ENCODE measurements at regions of chr18 and their contacts with region 1.

Region 1: GRCh38 chr18:79393635-79394533 is 1.8 kb upstream of the NFATC1 start:
- DNase-seq: peak; percentile 31
- H3K4me3 Mint-ChIP-seq: peak overlapping the region; percentile 85
- H3K27ac Mint-ChIP-seq: peak overlapping the region; percentile 90
- H3K4me1 Mint-ChIP-seq: peaks cover 21% of the 10 kb centered on the region
- H3K27me3 Mint-ChIP-seq: peaks cover 24% of the 10 kb centered on the region

Region 2: GRCh38 chr18:78776706-78777285 is 617.1 kb before region 1 on chr18:
- intact Hi-C with region 1: no loop called
- DNase-seq: no peak
- H3K4me3 Mint-ChIP-seq: no peak overlapping the region
- H3K27ac Mint-ChIP-seq: no peak overlapping the region
- H3K4me1 Mint-ChIP-seq: no peaks in the 10 kb centered on the region
- H3K27me3 Mint-ChIP-seq: no peaks in the 10 kb centered on the region

Region 3: DNA sequence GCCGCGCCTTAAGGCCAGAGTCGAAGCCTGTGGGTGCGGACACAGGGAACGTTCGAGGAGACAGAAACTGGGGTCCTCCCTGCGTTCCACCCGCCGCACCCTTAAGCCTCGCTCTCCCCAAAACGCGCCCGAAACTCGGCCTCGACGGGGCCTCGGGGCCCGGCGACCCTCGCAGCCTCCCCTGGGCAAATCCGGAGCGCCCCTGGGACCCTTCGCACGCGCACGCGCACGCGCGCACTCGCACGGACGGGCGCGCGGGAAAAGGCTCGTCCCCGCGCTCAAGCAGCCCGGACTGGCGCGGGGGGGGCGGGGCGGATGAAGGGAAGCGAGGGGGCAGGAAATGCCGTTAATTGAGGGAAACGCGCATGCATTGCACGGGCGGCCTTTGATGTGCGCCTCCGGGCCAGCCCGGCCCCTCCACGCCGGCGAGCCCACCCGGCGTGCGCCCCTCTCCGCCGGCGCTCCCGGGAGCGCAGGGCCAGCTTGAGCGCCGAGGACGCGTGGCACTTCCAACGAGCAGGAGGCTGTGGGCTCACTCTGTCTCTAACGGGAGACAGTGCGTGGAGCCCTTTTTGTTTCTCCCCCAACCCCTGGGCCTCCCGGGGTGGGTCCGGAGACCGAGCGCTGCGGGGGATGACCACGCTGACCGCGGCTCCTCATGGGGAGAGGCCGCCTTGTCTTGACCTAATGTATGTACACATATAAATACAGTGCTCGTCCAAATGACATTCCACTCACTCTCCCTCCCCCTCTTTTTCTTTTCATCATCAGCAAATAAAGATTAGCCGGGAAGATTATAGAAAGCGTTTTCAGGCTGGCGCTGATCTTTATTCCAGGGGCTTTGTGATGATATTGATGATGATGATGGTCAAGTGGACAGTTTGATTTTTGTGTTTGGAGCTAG is 419.5 kb before region 1 on chr18:
- intact Hi-C with region 1: no loop called
- DNase-seq: no peak
- H3K4me3 Mint-ChIP-seq: no peak overlapping the region
- H3K27ac Mint-ChIP-seq: no peak overlapping the region
- H3K4me1 Mint-ChIP-seq: peaks cover 6% of the 10 kb centered on the region
- H3K27me3 Mint-ChIP-seq: peaks cover 60% of the 10 kb centered on the region

Region 4: DNA sequence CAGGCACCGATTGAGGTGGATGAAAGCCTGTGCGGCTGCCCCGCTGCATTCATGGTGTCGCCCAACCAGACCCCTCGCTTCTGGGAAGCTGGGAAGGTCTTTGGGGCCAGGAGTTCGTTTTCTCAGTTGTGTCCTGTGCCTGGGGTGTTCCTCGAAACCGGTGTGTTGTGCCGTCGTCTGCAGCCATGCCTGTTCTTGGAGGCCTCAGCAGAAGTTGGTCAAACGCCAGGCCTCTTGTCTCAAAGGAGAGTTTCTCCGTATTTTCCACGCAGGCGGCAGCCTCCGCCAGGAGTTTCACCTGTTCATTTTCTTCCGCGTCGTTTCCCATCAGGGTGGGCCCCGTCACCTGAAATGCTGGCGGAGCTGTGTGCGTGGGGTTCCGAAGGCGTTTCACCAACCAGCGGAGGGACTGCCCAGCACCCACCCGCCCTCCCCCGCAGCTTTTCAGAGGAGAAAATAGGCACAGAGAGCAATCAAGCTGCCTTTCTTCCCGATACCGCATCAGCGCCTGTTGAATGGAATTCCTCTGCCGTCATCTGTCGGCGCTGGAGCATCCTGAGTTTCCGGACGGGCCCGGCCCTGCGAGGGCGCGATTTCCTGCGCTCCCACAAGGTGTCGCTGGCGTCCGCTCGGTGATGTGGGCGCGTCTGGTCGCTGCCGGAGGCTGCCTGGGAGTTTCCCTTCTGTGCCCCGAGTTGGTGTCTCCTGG is 15.2 kb before region 1 on chr18:
- intact Hi-C with region 1: loop called (anchors 1 kb)
- DNase-seq: peak; percentile 76
- H3K4me3 Mint-ChIP-seq: no peak overlapping the region
- H3K27ac Mint-ChIP-seq: no peak overlapping the region
- H3K4me1 Mint-ChIP-seq: peaks cover 14% of the 10 kb centered on the region
- H3K27me3 Mint-ChIP-seq: no peaks in the 10 kb centered on the region

Region 5: DNA sequence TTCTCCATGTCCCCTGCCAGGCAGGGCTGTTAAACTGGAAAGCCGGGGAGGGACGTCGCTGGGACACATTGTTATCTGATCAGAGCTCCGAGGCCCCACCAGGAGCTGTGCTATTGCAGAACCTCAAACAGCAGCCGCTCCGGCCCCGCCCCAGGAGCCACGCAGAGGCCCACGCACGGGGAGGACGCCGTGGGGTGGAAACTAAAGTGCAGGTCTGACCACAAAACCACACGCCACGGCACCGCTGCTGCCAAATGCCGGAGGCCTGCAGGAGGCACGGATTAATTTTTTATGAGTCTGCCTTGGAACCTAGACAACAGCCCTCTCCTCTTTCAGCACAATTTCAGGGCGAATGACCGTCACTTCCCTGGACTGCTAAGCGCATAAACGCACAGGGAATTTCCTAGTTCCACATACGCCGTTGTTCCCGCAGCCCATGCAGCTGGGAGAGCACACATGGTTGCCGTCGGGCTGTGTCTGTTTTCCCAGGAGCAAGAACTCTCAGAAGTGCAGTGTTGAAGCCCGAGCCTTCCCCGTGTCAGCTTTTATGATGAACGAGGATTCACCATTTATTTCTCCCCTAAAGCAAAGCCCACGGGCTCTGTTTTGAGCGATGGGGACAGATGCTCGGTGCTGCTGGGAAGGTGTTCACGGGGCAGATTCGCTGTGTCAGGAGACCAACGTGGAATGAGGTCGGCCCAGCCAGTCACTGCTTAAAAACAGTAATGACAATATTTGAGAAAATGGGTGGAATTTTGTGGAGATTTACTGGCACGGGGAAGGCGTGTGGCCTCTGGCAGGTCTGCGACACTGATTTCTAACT is 45.5 kb after region 1 on chr18:
- intact Hi-C with region 1: loop called (anchors 5 kb)
- DNase-seq: no peak
- H3K4me3 Mint-ChIP-seq: no peak overlapping the region
- H3K27ac Mint-ChIP-seq: peak overlapping the region; percentile 48
- H3K4me1 Mint-ChIP-seq: peaks cover 9% of the 10 kb centered on the region
- H3K27me3 Mint-ChIP-seq: no peaks in the 10 kb centered on the region

Region 6: DNA sequence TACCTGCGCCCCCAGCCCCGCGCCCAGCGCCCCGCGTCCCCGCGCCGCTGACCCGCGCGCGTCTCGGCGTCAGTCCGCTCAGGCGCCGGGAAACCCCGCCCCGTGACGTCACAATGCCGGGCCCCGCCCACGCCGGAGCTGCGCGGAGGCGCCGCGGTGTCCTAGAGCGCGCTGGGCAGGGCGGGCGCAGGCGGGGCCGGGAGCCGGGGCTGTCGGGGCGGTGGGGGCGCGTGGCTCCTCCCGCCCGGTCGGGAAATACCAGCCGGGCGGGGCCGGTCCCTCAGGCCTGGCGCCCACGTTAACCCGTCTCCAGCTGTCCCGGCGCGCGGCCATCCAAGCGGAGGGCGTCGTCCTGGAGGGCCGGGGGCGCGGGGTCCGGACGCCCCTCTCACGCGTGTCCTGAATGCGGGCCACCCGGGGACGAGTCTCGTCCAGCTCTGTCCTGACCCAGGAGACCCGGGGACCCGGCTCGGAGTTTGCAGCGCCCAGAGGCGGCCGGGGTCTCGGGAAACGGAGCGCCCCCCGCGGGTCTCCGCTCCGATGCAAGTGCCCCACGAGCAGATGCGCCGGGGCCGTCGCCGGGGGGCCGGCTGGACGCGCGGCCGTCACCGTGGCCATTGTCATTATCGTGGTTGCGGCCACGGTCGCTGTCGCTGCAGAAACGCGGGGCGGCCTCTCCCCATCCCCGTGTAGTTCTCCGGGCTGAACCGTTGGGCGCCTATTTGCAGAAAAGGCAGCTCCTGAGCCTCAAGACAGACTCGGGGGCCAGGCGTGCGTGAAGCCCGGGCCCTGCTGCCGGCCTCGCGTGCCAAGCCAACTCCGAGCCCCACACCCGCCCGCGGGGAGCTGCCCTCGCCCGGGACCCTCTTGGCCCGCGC is 557.9 kb after region 1 on chr18 and contains the start of gene SLC66A2:
- intact Hi-C with region 1: loop called (anchors 10 kb)
- DNase-seq: peak; percentile 89
- H3K4me3 Mint-ChIP-seq: peak within 1 kb of the TSS; percentile 89
- H3K27ac Mint-ChIP-seq: peak within 1 kb of the TSS; percentile 82
- H3K4me1 Mint-ChIP-seq: peaks cover 37% of the 10 kb centered on the region
- H3K27me3 Mint-ChIP-seq: no peaks in the 10 kb centered on the region
- total RNA-seq, gene SLC66A2: 49.2 and 54.6 TPM in 2 replicates

Measured in activated T-helper 1 cell treated with anti-CD3 and anti-CD28 coated beads, Interleukin-12 subunit alpha, Interleukin-12 subunit beta, Interleukin-2, Interleukin-4 antibody, amounts not matched to agents 30 ng/mL and 10 ng/mL and 1 ng/mL, durations not matched to agents 14 hours and 24 hours and 36 hours (primary cell).